Left cardiac atrium (tissue), 4 donors: ENCODE measurements at regions of chr3 and their contacts with region 1.

Region 1: GRCh38 chr3:20185701-20186598 is at the start of gene SGO1:
- DNase-seq: peak; percentile 100
- ATAC-seq: peak; percentile 100
- total RNA-seq, gene SGO1: 0.80 TPM in 1 of 2 donors, not detected in the other

Region 2: GRCh38 chr3:19946832-19947548 is 239.0 kb before region 1 on chr3 and contains the start of gene RAB5A:
- intact Hi-C with region 1: loop called in 1 of 2 experiments (anchors 10 kb)
- DNase-seq: peak; percentile 97
- ATAC-seq: peak; percentile 97 to 98
- total RNA-seq, gene RAB5A: 40.9 to 71.2 TPM